ENCODE measurements at regions of chr11 and their contacts with region 1.

Region 1: GRCh38 chr11:75388386-75389275 is 10.7 kb upstream of the RPS3 start:
- DNase-seq: peak; percentile 95
- ATAC-seq: peak; percentile 40
- H3K4me3 ChIP-seq: no peak overlapping the region
- H3K27ac ChIP-seq: peak overlapping the region; percentile 8; the same call in 1 of the 2 replicates
- H3K4me1 ChIP-seq: peaks cover 41% of the 10 kb centered on the region
- H3K27me3 ChIP-seq: no peaks in the 10 kb centered on the region
- CTCF ChIP-seq: peak; percentile 98

Region 2: DNA sequence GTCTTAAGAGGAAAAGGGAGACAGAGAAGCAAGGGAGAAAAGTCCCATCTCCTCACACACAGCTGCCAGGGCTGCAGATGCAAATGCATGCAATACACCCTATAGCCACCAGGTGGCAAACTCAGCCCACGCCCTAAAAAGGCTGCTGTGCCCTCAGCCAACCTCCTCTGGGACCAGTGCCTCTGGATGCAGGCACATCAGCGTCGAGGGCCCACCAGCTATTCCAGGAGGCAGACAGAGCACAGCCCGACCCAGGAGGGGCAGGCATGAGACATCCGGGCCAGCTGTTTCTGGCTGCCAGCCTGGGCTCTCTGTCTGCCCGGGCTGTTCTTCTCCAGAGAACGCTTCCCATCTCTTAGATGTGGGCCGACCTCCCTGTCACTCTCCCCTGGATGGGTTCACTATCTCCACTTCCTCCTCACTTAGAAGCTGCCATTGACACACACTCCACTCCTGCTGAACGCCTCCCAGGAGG is 108.4 kb before region 1 on chr11:
- CTCF ChIA-PET with region 1: no interaction called
- POLR2A ChIA-PET with region 1: no interaction called
- intact Hi-C with region 1: loop called (anchors 1 kb)
- DNase-seq: peak; percentile 90
- ATAC-seq: peak; percentile 95
- H3K4me3 ChIP-seq: no peak overlapping the region
- H3K27ac ChIP-seq: no peak overlapping the region
- H3K4me1 ChIP-seq: no peaks in the 10 kb centered on the region
- H3K27me3 ChIP-seq: no peaks in the 10 kb centered on the region
- CTCF ChIP-seq: peak; percentile 97

Region 3: GRCh38 chr11:75365711-75366181 is 22.9 kb before region 1 on chr11:
- CTCF ChIA-PET with region 1: interaction called, 11 read pairs
- POLR2A ChIA-PET with region 1: no interaction called
- intact Hi-C with region 1: no loop called
- DNase-seq: peak; percentile 58
- ATAC-seq: peak; percentile 82
- H3K4me3 ChIP-seq: no peak overlapping the region
- H3K27ac ChIP-seq: peak overlapping the region; percentile 30
- H3K4me1 ChIP-seq: peaks cover 17% of the 10 kb centered on the region
- H3K27me3 ChIP-seq: no peaks in the 10 kb centered on the region
- CTCF ChIP-seq: no peak

Region 4: DNA sequence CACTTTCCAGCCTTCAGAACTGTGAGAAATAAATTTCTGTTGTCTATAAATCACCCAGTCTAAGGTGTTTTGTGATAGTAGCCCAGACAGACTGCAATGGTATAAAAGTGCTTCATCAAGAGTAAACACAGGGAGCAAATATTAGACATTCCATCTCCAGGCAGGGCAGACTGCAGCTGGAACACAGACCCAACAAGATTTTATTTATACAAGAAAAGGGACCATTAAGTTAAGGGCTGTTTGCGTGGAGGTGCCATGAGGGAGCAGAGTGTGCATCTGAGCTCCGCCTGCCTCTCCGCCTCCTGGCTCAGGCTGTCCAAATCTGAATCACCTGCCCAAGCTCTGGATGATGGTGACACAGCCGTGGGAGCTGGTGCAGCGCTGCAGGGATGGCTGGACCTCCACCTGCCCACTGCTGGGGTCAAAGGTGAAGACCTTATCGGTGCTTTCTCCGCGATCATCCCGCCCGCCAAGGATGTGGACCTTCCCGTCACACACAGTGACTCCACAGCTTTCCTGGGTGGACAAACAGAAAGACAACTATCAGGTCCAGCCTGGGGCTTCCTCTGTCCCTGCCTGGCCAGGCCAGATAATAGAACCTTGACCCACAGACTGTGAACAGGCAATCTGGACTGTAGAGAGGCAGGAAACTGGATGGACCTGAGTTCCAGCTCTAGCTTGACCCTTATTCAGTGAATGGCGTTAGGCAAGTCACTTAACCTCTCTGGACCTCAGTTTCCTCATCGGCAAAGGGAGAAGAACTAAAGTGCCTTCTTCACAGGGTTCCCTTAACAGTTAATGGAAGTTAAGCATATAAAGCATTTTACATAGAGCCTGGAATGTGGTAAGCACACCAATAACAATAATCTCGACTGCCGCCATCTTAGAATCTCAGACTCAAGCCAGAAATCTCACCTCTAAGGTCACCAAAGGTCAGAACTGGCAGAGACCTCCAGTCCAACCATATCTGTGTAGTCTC is 33.9 kb after region 1 on chr11:
- CTCF ChIA-PET with region 1: interaction called, 3 read pairs
- POLR2A ChIA-PET with region 1: no interaction called
- intact Hi-C with region 1: loop called (anchors 1 kb)
- DNase-seq: peak; percentile 86
- ATAC-seq: peak; percentile 65
- H3K4me3 ChIP-seq: peak overlapping the region; percentile 8; the same call in 1 of the 2 replicates
- H3K27ac ChIP-seq: peak overlapping the region; percentile 87
- H3K4me1 ChIP-seq: peaks cover 60% of the 10 kb centered on the region
- H3K27me3 ChIP-seq: no peaks in the 10 kb centered on the region
- CTCF ChIP-seq: no peak

Region 5: DNA sequence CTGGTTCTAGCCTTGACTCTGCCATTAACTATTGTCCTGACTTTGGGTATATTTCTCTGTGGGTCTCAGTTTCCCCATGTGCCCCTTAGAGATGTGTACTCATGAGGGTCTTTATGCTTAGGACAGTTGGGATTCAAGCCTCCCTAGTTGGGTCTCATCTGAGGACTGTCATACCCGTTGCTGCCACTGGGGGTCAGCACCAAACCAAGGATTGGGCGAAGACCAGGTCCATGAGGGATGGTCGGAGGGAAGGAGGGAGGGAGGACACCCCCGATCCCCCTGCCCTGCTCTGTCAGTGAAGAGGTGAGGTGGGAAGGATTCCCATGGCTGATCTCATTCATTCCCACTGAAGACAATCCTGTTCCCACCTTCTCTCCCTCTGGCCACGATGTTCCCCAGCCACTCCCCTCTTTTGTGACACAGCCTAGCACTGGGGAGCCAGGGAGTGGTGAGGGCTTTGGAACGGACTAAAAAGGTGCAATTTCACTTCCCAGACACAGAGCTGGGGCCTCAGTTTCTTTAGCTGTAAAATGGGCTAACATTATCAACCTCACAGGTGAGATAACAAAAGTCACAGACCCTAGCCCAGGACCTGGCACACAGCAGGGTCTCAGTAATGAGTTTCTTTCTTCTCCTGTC is 56.8 kb after region 1 on chr11:
- CTCF ChIA-PET with region 1: interaction called, 5 read pairs
- POLR2A ChIA-PET with region 1: no interaction called
- intact Hi-C with region 1: loop called (anchors 2 kb)
- DNase-seq: peak; percentile 88
- ATAC-seq: peak; percentile 85
- H3K4me3 ChIP-seq: no peak overlapping the region
- H3K27ac ChIP-seq: no peak overlapping the region
- H3K4me1 ChIP-seq: no peaks in the 10 kb centered on the region
- H3K27me3 ChIP-seq: no peaks in the 10 kb centered on the region
- CTCF ChIP-seq: peak; percentile 99